Activated B cell treated with CpG ODN at 0.5 μM for 24 hours (primary cell): ENCODE measurements at regions of chr1 and their contacts with region 1.

Region 1: DNA sequence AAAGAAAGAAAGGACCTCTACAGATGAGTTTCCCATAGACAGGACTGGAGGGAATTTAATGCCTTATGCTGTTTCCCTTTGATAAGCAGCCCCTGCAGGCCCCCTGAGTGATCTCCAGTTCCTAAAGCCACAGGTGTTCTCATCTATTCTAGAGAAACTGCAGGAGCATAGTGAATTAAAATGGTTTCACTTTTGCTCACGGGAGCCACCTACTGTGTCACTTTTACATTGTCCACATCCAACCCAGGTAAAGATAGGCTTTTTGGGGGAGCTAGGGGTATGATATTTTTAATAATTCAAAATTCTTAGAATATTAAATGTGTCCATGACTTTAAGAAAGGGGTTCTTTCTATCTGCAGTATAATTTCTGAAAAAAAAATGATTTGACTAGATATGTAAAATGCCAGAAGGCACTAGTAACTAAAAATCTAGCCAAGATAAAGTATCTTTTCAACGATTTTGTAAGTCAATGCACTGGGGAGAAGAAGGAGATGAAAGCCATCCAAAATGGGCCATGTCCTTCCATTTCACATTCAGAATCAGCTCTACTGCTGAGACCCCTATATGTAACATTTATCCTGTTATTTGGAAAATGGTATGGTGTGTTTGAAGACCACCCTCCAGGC is 267.3 kb upstream of the DUSP10 start:
- DNase-seq: no peak
- ATAC-seq: peak; percentile 77
- H3K4me3 Mint-ChIP-seq: no peak overlapping the region
- H3K27ac Mint-ChIP-seq: no peak overlapping the region
- H3K4me1 Mint-ChIP-seq: peaks cover 2% of the 10 kb centered on the region
- H3K27me3 Mint-ChIP-seq: no peaks in the 10 kb centered on the region
- CTCF ChIP-seq: no peak

Region 2: DNA sequence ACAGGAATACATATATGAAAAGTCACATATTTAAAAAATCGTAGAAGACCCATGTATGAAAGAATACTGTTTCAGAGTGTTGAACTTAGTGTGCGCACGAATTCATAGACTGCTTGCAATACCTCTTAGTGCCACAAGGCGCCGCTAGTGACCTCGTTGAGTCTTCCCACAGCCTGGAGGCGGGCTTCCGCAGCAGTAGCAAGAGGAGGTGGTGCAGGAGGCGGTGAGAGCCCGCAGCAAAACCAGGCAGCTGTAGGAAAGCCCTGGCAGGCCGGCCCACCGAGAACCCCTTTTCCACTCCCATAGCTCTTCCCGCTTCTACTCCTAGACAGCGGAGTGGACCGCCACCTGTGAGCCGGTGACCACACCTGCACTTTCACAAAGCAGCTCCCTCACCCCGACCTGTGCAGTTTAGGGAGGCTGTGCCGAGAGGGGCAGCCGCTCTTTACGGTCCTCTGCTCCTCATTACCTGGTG is 1199.0 kb before region 1 on chr1:
- CTCF ChIA-PET with region 1: no interaction called
- POLR2A ChIA-PET with region 1: no interaction called
- intact Hi-C with region 1: loop called (anchors 5 kb)
- DNase-seq: peak; percentile 54
- ATAC-seq: peak; percentile 99
- H3K4me3 Mint-ChIP-seq: peak overlapping the region; percentile 55
- H3K27ac Mint-ChIP-seq: no peak overlapping the region
- H3K4me1 Mint-ChIP-seq: peaks cover 2% of the 10 kb centered on the region
- H3K27me3 Mint-ChIP-seq: peaks cover 4% of the 10 kb centered on the region
- CTCF ChIP-seq: peak; percentile 96

Region 3: DNA sequence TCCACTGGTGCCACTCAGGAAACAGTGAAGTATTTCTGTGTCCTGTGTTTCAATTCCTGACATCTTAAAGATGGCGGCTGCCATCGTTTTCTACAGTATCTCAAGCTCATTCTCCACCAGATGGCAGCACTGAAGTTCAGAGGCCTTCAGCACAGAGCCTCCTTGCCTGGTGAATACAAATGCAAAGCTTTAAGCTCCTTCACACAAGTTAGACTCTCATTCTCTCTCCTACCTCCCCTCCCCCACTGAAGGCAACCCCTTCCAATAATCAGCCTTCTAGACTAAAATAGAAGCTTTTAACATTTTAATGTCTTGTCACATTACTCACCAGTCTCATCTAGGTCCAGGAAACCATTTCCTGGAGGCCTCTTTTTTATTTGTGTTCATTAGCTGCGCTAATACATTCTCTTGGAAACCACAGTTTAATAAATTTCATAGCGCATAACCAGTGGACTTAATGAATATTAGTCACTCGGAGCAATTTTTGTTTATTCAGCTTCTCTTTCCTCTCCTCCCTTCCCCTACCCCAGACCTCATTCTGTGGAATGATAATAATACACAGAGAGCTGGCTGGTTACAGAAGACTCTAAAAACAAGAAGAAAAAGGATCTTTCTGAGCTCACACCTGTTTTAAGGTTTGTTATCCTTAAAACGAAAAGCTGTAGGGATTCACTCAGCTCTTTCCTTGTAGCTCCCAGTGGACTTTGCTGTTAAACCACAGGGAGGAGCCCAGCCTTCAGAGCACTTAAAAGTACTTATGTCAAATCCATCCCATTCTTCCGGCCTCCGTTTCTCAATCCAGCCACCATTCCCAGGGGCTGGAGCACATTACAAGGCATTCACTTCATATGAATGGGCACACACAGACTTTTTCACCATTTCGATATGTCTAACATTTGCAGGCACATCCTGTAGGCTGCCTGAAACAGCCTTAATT is 745.1 kb before region 1 on chr1:
- CTCF ChIA-PET with region 1: no interaction called
- POLR2A ChIA-PET with region 1: no interaction called
- intact Hi-C with region 1: loop called (anchors 2 kb)
- DNase-seq: no peak
- ATAC-seq: peak; percentile 69
- H3K4me3 Mint-ChIP-seq: no peak overlapping the region
- H3K27ac Mint-ChIP-seq: no peak overlapping the region
- H3K4me1 Mint-ChIP-seq: no peaks in the 10 kb centered on the region
- H3K27me3 Mint-ChIP-seq: peaks cover 19% of the 10 kb centered on the region
- CTCF ChIP-seq: no peak

Region 4: GRCh38 chr1:221478050-221478949 is 530.9 kb before region 1 on chr1:
- CTCF ChIA-PET with region 1: interaction called, 37 read pairs
- POLR2A ChIA-PET with region 1: no interaction called
- intact Hi-C with region 1: loop called (anchors 1 kb)
- DNase-seq: peak; percentile 27
- ATAC-seq: peak; percentile 93
- H3K4me3 Mint-ChIP-seq: no peak overlapping the region
- H3K27ac Mint-ChIP-seq: no peak overlapping the region
- H3K4me1 Mint-ChIP-seq: peaks cover 4% of the 10 kb centered on the region
- H3K27me3 Mint-ChIP-seq: peaks cover 4% of the 10 kb centered on the region
- CTCF ChIP-seq: no peak

Region 5: DNA sequence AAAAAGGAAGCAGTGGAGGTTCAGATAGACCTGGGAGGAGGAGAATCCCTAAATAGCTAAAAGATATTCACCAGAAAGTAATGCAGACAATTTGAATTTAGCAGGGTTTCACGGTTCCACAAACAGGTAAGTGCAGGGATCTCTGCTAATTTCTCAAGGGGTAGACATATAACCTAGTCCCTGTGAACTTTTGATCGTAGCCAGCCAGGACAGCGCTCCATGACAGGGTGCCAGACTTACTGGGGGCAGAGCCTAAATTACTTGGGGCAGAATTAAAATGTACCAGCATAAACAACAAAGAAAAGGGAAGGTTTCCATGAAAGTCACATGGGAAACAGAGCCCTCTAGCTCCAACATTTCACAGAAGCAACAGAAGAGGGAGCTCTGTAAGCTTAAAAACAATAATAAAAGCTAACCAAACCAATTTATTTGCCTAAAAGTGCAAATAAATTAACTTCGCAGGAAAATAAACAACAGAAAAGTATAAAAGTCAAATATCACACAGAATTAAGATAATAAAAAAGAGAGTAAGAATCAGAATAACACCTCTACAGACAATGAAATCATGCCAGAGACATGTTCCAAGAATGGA is 465.6 kb before region 1 on chr1:
- CTCF ChIA-PET with region 1: no interaction called
- POLR2A ChIA-PET with region 1: no interaction called
- intact Hi-C with region 1: loop called (anchors 1 kb)
- DNase-seq: no peak
- ATAC-seq: no peak
- H3K4me3 Mint-ChIP-seq: no peak overlapping the region
- H3K27ac Mint-ChIP-seq: no peak overlapping the region
- H3K4me1 Mint-ChIP-seq: no peaks in the 10 kb centered on the region
- H3K27me3 Mint-ChIP-seq: peaks cover under 1% of the 10 kb centered on the region
- CTCF ChIP-seq: no peak

Region 6: DNA sequence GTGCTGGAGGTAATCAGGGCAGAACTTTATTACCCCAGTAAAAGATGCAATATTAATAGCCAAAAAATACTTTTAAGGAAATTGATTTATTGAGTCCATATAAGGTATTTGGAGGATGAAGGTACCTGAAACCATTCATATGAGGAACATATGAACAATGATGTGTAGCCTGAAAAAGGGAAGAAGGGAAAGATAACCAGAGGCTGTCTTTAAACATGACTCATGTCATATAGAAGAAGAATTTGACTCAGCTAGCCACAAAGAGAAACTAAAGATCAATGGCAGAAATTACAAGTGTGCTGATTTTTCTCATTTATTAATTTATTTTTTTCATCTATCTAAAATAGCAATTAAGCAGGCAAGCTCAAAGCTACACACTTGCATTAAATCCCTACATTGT is 131.1 kb before region 1 on chr1:
- CTCF ChIA-PET with region 1: interaction called, 5 read pairs
- POLR2A ChIA-PET with region 1: no interaction called
- intact Hi-C with region 1: loop called (anchors 5 kb)
- DNase-seq: no peak
- ATAC-seq: peak; percentile 36
- H3K4me3 Mint-ChIP-seq: no peak overlapping the region
- H3K27ac Mint-ChIP-seq: no peak overlapping the region
- H3K4me1 Mint-ChIP-seq: peaks cover 48% of the 10 kb centered on the region
- H3K27me3 Mint-ChIP-seq: no peaks in the 10 kb centered on the region
- CTCF ChIP-seq: no peak

Region 7: DNA sequence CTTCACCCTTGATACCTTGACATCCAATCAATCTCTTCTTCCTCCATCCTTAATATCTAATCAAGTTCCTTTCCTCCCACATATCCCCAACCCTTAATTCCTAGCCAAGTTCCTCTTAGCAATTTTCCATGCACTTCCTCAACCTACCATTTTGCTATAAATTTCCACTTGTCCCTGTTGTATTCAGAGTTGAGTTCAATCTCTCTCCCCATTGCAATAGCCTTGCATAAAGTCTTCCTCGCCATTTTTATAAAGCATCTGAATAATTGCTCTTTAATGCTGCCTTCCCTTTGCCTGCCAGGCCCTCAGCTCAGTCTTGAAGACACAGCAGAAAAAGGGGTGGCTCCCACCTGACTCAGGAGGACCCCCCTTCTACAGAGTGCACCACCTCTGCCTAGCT is 148.4 kb after region 1 on chr1:
- CTCF ChIA-PET with region 1: no interaction called
- POLR2A ChIA-PET with region 1: no interaction called
- intact Hi-C with region 1: no loop called
- DNase-seq: no peak
- ATAC-seq: no peak
- H3K4me3 Mint-ChIP-seq: no peak overlapping the region
- H3K27ac Mint-ChIP-seq: no peak overlapping the region
- H3K4me1 Mint-ChIP-seq: no peaks in the 10 kb centered on the region
- H3K27me3 Mint-ChIP-seq: no peaks in the 10 kb centered on the region
- CTCF ChIP-seq: no peak

Region 8: GRCh38 chr1:222171005-222171404 is 161.8 kb after region 1 on chr1:
- CTCF ChIA-PET with region 1: interaction called, 5 read pairs
- POLR2A ChIA-PET with region 1: no interaction called
- intact Hi-C with region 1: loop called (anchors 2 kb)
- DNase-seq: no peak
- ATAC-seq: peak; percentile 52
- H3K4me3 Mint-ChIP-seq: no peak overlapping the region
- H3K27ac Mint-ChIP-seq: no peak overlapping the region
- H3K4me1 Mint-ChIP-seq: no peaks in the 10 kb centered on the region
- H3K27me3 Mint-ChIP-seq: peaks cover 16% of the 10 kb centered on the region
- CTCF ChIP-seq: no peak